ENCODE measurements at regions of chrX and their contacts with region 1.

Region 1: DNA sequence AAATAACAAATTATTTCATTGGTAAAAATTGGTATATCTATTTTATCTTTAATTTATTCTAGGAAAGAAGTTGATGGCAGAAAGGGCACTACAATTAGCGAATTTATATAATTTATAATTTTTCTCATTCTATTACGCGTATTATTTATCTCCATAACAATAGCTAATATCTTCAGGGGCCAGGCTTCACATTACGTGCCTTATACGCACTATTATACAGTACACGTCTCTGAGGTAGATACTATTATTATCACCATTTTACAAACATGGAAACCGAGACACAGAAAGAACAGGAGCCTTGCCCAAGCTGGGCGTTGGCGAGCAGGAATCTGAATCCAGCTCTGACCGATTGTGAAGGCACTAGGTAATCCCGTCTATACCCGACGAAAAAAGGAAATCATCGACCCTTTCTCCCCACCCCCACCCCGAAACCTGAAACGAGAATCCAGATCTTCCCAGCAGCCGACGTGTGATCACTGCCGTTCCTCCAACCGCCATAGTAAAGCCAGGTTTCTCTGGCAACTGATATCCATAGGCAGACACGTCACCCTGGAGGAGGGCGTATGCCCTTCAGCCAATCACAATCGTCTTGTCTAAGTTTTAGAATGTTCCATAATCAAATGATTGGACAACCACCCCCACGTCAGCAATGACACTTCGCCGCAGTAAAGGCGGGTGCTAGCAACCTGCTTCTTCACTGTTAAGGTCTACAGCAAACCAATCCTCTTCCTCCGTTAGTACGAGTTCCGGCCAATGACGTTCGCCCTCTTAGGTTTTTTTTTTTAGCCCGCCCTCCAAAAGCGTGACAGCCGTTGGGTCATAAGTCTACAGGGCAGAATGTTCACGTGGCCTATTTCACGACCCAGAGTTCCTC is at the start of gene MORF4L2:
- DNase-seq: peak; percentile 97
- H3K4me3 ChIP-seq: peak within 1 kb of the TSS; percentile 81
- H3K27ac ChIP-seq: peak within 1 kb of the TSS; percentile 98
- H3K27me3 ChIP-seq: no peaks in the 10 kb centered on the region
- CTCF ChIP-seq: no peak
- polyA plus RNA-seq, gene MORF4L2: 452 and 562 TPM in 2 replicates

Region 2: GRCh38 chrX:103124284-103124683 is 562.2 kb before region 1 on chrX:
- CTCF ChIA-PET with region 1: no interaction called
- POLR2A ChIA-PET with region 1: no interaction called
- DNase-seq: no peak
- H3K4me3 ChIP-seq: no peak overlapping the region
- H3K27ac ChIP-seq: no peak overlapping the region
- H3K27me3 ChIP-seq: no peaks in the 10 kb centered on the region
- CTCF ChIP-seq: no peak

Region 3: DNA sequence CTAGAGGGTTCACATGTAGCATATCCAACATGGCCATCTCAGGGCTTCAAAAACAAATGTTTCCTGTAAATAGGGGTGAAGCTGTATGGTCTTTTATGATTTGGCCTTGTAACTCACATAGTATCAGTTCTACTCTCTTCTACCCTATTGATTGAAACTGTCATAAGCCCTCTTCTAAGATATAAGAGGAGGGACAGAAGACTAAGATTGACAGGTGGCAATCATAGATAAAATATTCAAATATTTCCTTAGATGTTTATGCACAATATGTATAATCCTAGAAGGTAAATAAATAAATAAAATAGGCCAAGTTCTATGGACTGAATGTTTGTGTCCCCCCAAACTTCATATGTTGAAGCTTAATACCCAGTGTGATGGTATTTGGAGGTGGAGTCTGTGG is 317.0 kb before region 1 on chrX:
- CTCF ChIA-PET with region 1: no interaction called
- POLR2A ChIA-PET with region 1: no interaction called
- DNase-seq: no peak
- H3K4me3 ChIP-seq: no peak overlapping the region
- H3K27ac ChIP-seq: no peak overlapping the region
- H3K27me3 ChIP-seq: no peaks in the 10 kb centered on the region
- CTCF ChIP-seq: no peak

Region 4: DNA sequence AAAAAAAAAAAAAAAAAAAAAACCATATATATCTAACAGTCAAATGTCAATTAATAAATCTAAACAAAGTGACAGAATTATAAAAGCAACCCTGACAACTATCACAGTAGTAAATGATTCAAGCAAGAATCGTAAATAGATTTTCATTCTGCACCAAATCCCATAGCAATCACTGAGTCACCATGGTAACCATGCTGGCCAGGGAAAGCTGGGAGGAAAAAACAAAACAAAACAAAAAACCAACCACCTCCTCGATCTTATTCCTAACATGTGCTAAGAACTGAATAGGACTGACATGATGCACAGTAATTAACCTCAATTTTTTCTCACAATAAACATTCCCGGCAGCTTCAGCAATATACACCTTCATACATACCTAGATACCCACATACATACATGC is 136.5 kb before region 1 on chrX:
- CTCF ChIA-PET with region 1: interaction called, 12 read pairs
- POLR2A ChIA-PET with region 1: no interaction called
- DNase-seq: no peak
- H3K4me3 ChIP-seq: no peak overlapping the region
- H3K27ac ChIP-seq: no peak overlapping the region
- H3K27me3 ChIP-seq: no peaks in the 10 kb centered on the region
- CTCF ChIP-seq: no peak

Region 5: DNA sequence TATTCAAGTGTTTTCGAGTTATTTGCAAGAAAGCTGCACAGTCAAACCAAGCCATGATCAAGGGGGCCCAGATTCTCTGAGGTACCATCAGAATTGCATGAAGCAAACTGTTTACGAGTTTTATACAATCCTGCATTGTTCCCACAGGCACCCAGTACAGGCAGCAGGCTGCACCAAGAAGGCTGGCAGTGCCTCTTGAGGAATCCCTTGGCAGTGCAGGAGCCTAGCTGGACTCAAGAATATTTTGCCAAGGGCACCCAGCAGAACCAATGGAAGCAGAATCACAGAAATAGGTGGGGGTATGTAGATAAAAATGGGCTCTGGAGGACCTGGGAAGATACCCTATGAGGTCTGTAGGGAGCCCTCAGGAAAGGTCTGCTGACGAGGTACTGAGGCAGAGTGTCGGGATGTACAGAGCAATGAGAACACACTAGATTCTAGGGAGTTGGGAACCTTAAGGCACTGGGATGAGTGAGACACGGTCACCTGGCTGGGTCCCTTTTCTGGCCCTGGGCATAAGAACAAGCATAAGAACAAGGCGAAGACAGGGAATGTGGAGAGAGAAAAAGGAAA is 87.7 kb after region 1 on chrX:
- CTCF ChIA-PET with region 1: interaction called, 14 read pairs
- POLR2A ChIA-PET with region 1: no interaction called
- DNase-seq: no peak
- H3K4me3 ChIP-seq: no peak overlapping the region
- H3K27ac ChIP-seq: no peak overlapping the region
- H3K27me3 ChIP-seq: peaks cover 2% of the 10 kb centered on the region
- CTCF ChIP-seq: peak; percentile 33

Region 6: GRCh38 chrX:103789004-103789403 is 102.6 kb after region 1 on chrX:
- CTCF ChIA-PET with region 1: no interaction called
- POLR2A ChIA-PET with region 1: no interaction called
- DNase-seq: no peak
- H3K4me3 ChIP-seq: no peak overlapping the region
- H3K27ac ChIP-seq: no peak overlapping the region
- H3K27me3 ChIP-seq: no peaks in the 10 kb centered on the region
- CTCF ChIP-seq: no peak

Region 7: DNA sequence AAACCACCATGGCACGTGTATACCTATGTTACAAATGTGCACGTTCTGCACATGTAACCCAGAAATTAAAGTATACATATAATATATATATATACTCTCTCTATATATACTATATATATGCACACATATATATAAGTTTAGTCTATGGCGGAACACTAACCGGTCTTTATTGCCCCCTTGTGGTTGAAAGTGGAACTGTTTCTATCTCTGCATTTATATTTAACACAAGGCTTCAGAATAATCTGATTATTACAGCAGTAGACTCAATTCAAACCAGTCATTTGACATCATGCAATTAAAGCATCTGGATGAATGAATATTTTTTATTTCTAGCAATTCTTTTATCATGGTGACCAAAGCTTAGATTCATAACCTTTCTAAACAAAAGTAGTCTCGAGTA is 131.1 kb after region 1 on chrX:
- CTCF ChIA-PET with region 1: interaction called, 12 read pairs
- POLR2A ChIA-PET with region 1: no interaction called
- DNase-seq: no peak
- H3K4me3 ChIP-seq: no peak overlapping the region
- H3K27ac ChIP-seq: no peak overlapping the region
- H3K27me3 ChIP-seq: no peaks in the 10 kb centered on the region
- CTCF ChIP-seq: peak; percentile 60